ENCODE measurements at regions of chr9 and their contacts with region 1.

Region 1: GRCh38 chr9:87771316-87771974 is 45.5 kb downstream of the CTSL start:
- DNase-seq: peak; percentile 44 to 80
- H3K4me3 ChIP-seq: no peak overlapping the region
- H3K27ac ChIP-seq: no peak overlapping the region
- H3K4me1 ChIP-seq: peaks cover 0 to 6% (median 1%) of the 10 kb centered on the region in 4 experiments; a peak in 3 of 7 replicates
- H3K27me3 ChIP-seq: no peaks in the 10 kb centered on the region
- CTCF ChIP-seq: no peak; a peak in 1 of 4 replicates
- EP300 ChIP-seq: no peak
- POLR2A ChIP-seq: no peak
- RAD21 ChIP-seq: no peak; a peak in 1 of 4 replicates

Region 2: GRCh38 chr9:87676986-87677601 is 94.4 kb before region 1 on chr9:
- CTCF ChIA-PET with region 1: no interaction called
- POLR2A ChIA-PET with region 1: no interaction called
- DNase-seq: no peak
- H3K4me3 ChIP-seq: no peak overlapping the region
- H3K27ac ChIP-seq: no peak overlapping the region
- H3K4me1 ChIP-seq: no peaks in the 10 kb centered on the region
- H3K27me3 ChIP-seq: no peaks in the 10 kb centered on the region
- CTCF ChIP-seq: no peak
- EP300 ChIP-seq: no peak
- POLR2A ChIP-seq: no peak
- RAD21 ChIP-seq: no peak

Region 3: GRCh38 chr9:87783180-87783579 is 11.7 kb after region 1 on chr9:
- CTCF ChIA-PET with region 1: interaction called, 11 read pairs
- POLR2A ChIA-PET with region 1: no interaction called
- DNase-seq: no peak
- H3K4me3 ChIP-seq: no peak overlapping the region
- H3K27ac ChIP-seq: no peak overlapping the region
- H3K4me1 ChIP-seq: no peaks in the 10 kb centered on the region
- H3K27me3 ChIP-seq: no peaks in the 10 kb centered on the region
- CTCF ChIP-seq: no peak
- EP300 ChIP-seq: no peak
- POLR2A ChIP-seq: no peak
- RAD21 ChIP-seq: no peak

Region 4: GRCh38 chr9:87792831-87793288 is 21.4 kb after region 1 on chr9:
- CTCF ChIA-PET with region 1: interaction called, 18 read pairs
- POLR2A ChIA-PET with region 1: no interaction called
- DNase-seq: no peak
- H3K4me3 ChIP-seq: no peak overlapping the region
- H3K27ac ChIP-seq: no peak overlapping the region
- H3K4me1 ChIP-seq: no peaks in the 10 kb centered on the region
- H3K27me3 ChIP-seq: no peaks in the 10 kb centered on the region
- CTCF ChIP-seq: peak in 2 of 3 experiments; percentile 1 to 25; a peak in 1 of 4 replicates
- EP300 ChIP-seq: no peak
- POLR2A ChIP-seq: no peak
- RAD21 ChIP-seq: peak in 1 of 2 experiments; percentile 20; a peak in 1 of 4 replicates

Measured in H1 (cell line).